ENCODE measurements at regions of chr20 and their contacts with region 1.

Region 1: GRCh38 chr20:44180814-44181213 is 6.2 kb downstream of the JPH2 start:
- DNase-seq: peak; percentile 35
- ATAC-seq: peak; percentile 89
- H3K4me3 ChIP-seq: no peak overlapping the region; the same call in 1 of the 2 replicates
- H3K27ac ChIP-seq: peak overlapping the region; percentile 55
- H3K4me1 ChIP-seq: peaks cover 9% of the 10 kb centered on the region
- H3K27me3 ChIP-seq: no peaks in the 10 kb centered on the region
- CTCF ChIP-seq: no peak
- POLR2A ChIP-seq: no peak
- RAD21 ChIP-seq: no peak

Region 2: GRCh38 chr20:44137210-44137801 is 43.5 kb before region 1 on chr20:
- CTCF ChIA-PET with region 1: interaction called, 3 read pairs
- POLR2A ChIA-PET with region 1: no interaction called
- dilution Hi-C with region 1: no loop called
- in situ Hi-C with region 1: no loop called
- intact Hi-C with region 1: loop called (anchors 5 kb)
- DNase-seq: peak; percentile 38
- ATAC-seq: peak; percentile 84
- H3K4me3 ChIP-seq: no peak overlapping the region
- H3K27ac ChIP-seq: peak overlapping the region; percentile 35
- H3K4me1 ChIP-seq: peaks cover 13% of the 10 kb centered on the region
- H3K27me3 ChIP-seq: no peaks in the 10 kb centered on the region; the same call in 1 of the 2 replicates
- CTCF ChIP-seq: no peak
- POLR2A ChIP-seq: no peak
- RAD21 ChIP-seq: no peak

Region 3: DNA sequence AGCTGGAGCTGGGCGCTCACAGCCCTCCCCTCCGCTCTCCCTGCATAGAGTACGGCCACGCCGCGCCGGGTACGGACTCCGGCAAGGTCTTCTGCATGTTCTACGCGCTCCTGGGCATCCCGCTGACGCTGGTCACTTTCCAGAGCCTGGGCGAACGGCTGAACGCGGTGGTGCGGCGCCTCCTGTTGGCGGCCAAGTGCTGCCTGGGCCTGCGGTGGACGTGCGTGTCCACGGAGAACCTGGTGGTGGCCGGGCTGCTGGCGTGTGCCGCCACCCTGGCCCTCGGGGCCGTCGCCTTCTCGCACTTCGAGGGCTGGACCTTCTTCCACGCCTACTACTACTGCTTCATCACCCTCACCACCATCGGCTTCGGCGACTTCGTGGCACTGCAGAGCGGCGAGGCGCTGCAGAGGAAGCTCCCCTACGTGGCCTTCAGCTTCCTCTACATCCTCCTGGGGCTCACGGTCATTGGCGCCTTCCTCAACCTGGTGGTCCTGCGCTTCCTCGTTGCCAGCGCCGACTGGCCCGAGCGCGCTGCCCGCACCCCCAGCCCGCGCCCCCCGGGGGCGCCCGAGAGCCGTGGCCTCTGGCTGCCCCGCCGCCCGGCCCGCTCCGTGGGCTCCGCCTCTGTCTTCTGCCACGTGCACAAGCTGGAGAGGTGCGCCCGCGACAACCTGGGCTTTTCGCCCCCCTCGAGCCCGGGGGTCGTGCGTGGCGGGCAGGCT is 569.4 kb after region 1 on chr20:
- CTCF ChIA-PET with region 1: no interaction called
- POLR2A ChIA-PET with region 1: no interaction called
- dilution Hi-C with region 1: no loop called
- in situ Hi-C with region 1: no loop called
- intact Hi-C with region 1: no loop called
- DNase-seq: no peak
- ATAC-seq: peak; percentile 33; the same call in 1 of the 2 replicates
- H3K4me3 ChIP-seq: no peak overlapping the region
- H3K27ac ChIP-seq: no peak overlapping the region
- H3K4me1 ChIP-seq: peaks cover 1% of the 10 kb centered on the region; the same call in 1 of the 2 replicates
- H3K27me3 ChIP-seq: peaks cover 62% of the 10 kb centered on the region
- CTCF ChIP-seq: peak; percentile 42
- POLR2A ChIP-seq: no peak
- RAD21 ChIP-seq: peak; percentile 27